A549 (cell line): ENCODE measurements at regions of chr16 and their contacts with region 1.

Region 1: DNA sequence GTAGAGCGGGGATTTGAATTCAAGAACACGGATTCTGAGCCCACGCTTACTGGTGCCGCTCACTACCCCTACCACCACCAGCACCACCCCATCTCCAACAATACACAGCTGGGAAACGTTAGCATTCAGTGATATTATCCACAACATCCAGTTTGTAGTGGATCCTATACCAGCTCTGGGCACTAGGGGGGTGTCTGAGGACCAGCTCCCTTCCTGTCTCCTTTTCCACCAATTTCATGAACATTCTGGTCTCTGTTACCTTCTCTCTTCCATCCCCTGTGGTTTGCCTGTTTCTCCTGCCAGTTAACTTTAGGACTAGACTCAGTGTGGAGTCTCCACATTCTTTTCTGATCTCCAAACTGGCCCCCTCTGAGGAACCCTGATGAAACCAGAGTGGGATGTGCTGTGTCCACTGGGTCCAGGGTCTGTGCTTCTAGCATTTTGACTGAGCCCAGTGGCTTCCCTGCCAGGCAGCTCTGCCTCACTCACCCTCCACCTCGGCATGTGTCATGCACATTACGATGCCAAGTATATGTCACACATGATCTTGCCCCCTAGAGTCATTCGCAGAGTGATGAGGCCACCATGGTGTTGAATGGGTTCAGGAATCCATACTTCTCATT is 187.0 kb upstream of the CDH13 start:
- DNase-seq: peak in 1 of 2 experiments; percentile 45
- ATAC-seq: peak; percentile 68 to 86; a peak in 5 of 6 replicates
- H3K4me3 ChIP-seq: no peak overlapping the region
- H3K27ac ChIP-seq: no peak overlapping the region
- H3K4me1 ChIP-seq: no peaks in the 10 kb centered on the region
- CTCF ChIP-seq: no peak
- EP300 ChIP-seq: no peak
- POLR2A ChIP-seq: no peak
- RAD21 ChIP-seq: no peak

Region 2: GRCh38 chr16:82456683-82457082 is 16.9 kb after region 1 on chr16:
- CTCF ChIA-PET with region 1: interaction called, 12 read pairs
- POLR2A ChIA-PET with region 1: no interaction called
- DNase-seq: peak; percentile 52 to 64
- ATAC-seq: peak; percentile 86 to 98
- H3K4me3 ChIP-seq: no peak overlapping the region
- H3K27ac ChIP-seq: no peak overlapping the region
- H3K4me1 ChIP-seq: no peaks in the 10 kb centered on the region
- CTCF ChIP-seq: peak; percentile 59
- EP300 ChIP-seq: no peak
- POLR2A ChIP-seq: no peak
- RAD21 ChIP-seq: peak; percentile 36 to 46; a peak in 3 of 5 replicates